H1 (cell line): ENCODE measurements at regions of chr2 and their contacts with region 1.

Region 1: GRCh38 chr2:219029829-219030165 is 11.5 kb downstream of the CFAP65 start:
- DNase-seq: peak; percentile 54 to 95
- H3K4me3 ChIP-seq: no peak overlapping the region
- H3K27ac ChIP-seq: no peak overlapping the region
- H3K4me1 ChIP-seq: peaks cover 0 to 3% (median under 1%) of the 10 kb centered on the region in 4 experiments; a peak in 2 of 7 replicates
- H3K27me3 ChIP-seq: no peaks in the 10 kb centered on the region; a peak in 1 of 7 replicates
- CTCF ChIP-seq: peak; percentile 94 to 98 (median 97)
- EP300 ChIP-seq: no peak
- POLR2A ChIP-seq: no peak
- RAD21 ChIP-seq: peak; percentile 90 to 92

Region 2: DNA sequence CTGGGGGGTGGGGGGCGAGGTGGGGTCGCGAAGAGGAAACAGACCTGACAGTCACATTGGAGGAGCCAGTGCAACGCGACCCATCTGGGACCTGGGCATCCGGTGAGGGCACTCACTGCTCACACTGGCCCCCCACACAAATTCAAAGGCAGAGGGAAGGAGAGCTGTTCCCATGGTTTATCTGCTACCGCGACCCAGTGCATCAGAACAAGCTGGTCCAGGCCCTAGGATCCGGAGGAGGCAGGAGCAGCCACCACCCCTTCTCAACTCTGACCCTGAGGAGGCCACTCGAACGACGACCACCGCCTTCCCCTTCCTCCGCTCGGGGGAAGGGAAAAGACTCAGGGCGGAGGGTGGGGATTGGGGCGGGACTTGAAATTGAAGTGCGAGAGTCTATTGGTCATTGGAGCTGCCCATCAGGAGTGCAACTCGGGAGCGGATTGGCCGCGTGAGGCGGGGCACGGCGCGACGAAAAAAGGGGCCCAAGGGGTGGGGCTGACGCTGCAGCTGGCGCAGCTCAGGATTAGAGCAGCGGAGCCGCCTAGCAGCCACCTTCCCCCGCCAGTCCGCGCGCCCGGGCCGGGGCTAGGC is 70.6 kb before region 1 on chr2 and contains the start of gene CDK5R2:
- CTCF ChIA-PET with region 1: no interaction called
- POLR2A ChIA-PET with region 1: no interaction called
- DNase-seq: peak; percentile 74 to 98
- H3K4me3 ChIP-seq: peak within 1 kb of the TSS; percentile 61 to 74 (median 68)
- H3K27ac ChIP-seq: no peak within 1 kb of the TSS
- H3K4me1 ChIP-seq: peaks cover 9 to 29% (median 18%) of the 10 kb centered on the region in 4 experiments
- H3K27me3 ChIP-seq: peaks cover 31 to 69% (median 54%) of the 10 kb centered on the region in 4 experiments
- CTCF ChIP-seq: no peak
- EP300 ChIP-seq: no peak
- POLR2A ChIP-seq: no peak
- RAD21 ChIP-seq: no peak
- total RNA-seq, gene CDK5R2: not detected in 2 replicates

Region 3: GRCh38 chr2:219010162-219010756 is 19.5 kb before region 1 on chr2:
- CTCF ChIA-PET with region 1: interaction called, 150 read pairs
- POLR2A ChIA-PET with region 1: interaction called, 5 read pairs
- DNase-seq: no peak
- H3K4me3 ChIP-seq: no peak overlapping the region
- H3K27ac ChIP-seq: no peak overlapping the region
- H3K4me1 ChIP-seq: no peaks in the 10 kb centered on the region
- H3K27me3 ChIP-seq: peaks cover 1 to 21% (median 10%) of the 10 kb centered on the region in 4 experiments
- CTCF ChIP-seq: peak; percentile 67 to 85 (median 81)
- EP300 ChIP-seq: no peak
- POLR2A ChIP-seq: no peak
- RAD21 ChIP-seq: peak; percentile 69 to 75

Region 4: GRCh38 chr2:219104107-219105035 is 74.6 kb after region 1 on chr2:
- CTCF ChIA-PET with region 1: interaction called, 1,777 read pairs
- POLR2A ChIA-PET with region 1: no interaction called
- DNase-seq: peak in 1 of 2 experiments; percentile 27
- H3K4me3 ChIP-seq: no peak overlapping the region
- H3K27ac ChIP-seq: no peak overlapping the region
- H3K4me1 ChIP-seq: no peaks in the 10 kb centered on the region
- H3K27me3 ChIP-seq: no peaks in the 10 kb centered on the region
- CTCF ChIP-seq: peak; percentile 29 to 98 (median 94)
- EP300 ChIP-seq: no peak
- POLR2A ChIP-seq: no peak
- RAD21 ChIP-seq: peak; percentile 73

Region 5: GRCh38 chr2:219119422-219120043 is 89.7 kb after region 1 on chr2:
- CTCF ChIA-PET with region 1: interaction called, 1,777 read pairs
- POLR2A ChIA-PET with region 1: interaction called, 3 read pairs
- DNase-seq: peak in 1 of 2 experiments; percentile 79
- H3K4me3 ChIP-seq: no peak overlapping the region
- H3K27ac ChIP-seq: no peak overlapping the region
- H3K4me1 ChIP-seq: no peaks in the 10 kb centered on the region; a peak in 2 of 7 replicates
- H3K27me3 ChIP-seq: no peaks in the 10 kb centered on the region
- CTCF ChIP-seq: peak; percentile 64 to 82 (median 67)
- EP300 ChIP-seq: no peak
- POLR2A ChIP-seq: no peak
- RAD21 ChIP-seq: peak; percentile 90 to 92